MCF 10A (cell line): ENCODE measurements at regions of chr12 and their contacts with region 1.

Region 1: DNA sequence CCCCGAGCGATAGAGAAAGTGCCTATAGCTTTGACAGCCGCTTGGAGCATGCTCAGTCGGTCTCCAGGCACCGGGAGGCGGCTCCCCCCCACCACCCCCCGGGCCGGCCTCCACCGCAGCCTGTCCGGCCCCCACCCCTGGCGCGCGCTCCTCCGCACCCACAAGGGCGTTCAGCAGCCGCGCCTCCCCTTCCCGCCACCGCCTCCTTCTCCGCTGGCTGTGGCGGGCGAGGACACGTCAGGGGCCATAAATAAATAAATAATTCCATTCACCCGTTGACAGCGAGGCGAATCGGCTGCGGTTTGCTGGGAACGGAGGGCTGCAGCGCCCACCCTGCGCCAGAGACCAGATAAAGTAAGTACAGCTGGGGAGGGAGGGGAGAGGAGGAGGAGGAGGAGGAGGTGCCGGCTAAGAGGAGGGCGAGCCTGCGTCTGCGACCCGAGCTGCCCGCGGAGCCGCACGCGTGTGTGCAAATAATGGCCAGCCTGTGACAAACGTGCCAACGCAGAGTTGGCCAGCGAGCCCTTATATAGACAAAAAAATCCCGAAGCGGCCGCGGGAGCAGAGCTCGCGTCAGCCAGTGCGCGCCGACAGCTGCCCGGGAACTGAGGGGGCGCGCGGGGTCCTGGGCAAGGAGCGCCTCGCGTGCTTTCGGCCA is at the start of gene SLC16A7:
- DNase-seq: peak; percentile 91
- H3K4me3 Mint-ChIP-seq: peak within 1 kb of the TSS; percentile 72
- H3K27ac Mint-ChIP-seq: peak within 1 kb of the TSS; percentile 92
- H3K4me1 Mint-ChIP-seq: peaks cover 27% of the 10 kb centered on the region
- H3K27me3 Mint-ChIP-seq: no peaks in the 10 kb centered on the region
- CTCF ChIP-seq: no peak
- total RNA-seq, gene SLC16A7: 28.4 and 32.6 TPM in 2 replicates

Region 2: GRCh38 chr12:59431266-59431665 is 164.7 kb before region 1 on chr12:
- CTCF ChIA-PET with region 1: no interaction called
- POLR2A ChIA-PET with region 1: interaction called, 4 read pairs
- intact Hi-C with region 1: loop called (anchors 5 kb)
- DNase-seq: peak; percentile 16
- H3K4me3 Mint-ChIP-seq: no peak overlapping the region
- H3K27ac Mint-ChIP-seq: no peak overlapping the region
- H3K4me1 Mint-ChIP-seq: no peaks in the 10 kb centered on the region
- H3K27me3 Mint-ChIP-seq: no peaks in the 10 kb centered on the region
- CTCF ChIP-seq: peak; percentile 29

Region 3: GRCh38 chr12:59632408-59632807 is 36.4 kb after region 1 on chr12:
- CTCF ChIA-PET with region 1: no interaction called
- POLR2A ChIA-PET with region 1: interaction called, 21 read pairs
- intact Hi-C with region 1: no loop called
- DNase-seq: peak; percentile 94
- H3K4me3 Mint-ChIP-seq: peak overlapping the region; percentile 28
- H3K27ac Mint-ChIP-seq: peak overlapping the region; percentile 33
- H3K4me1 Mint-ChIP-seq: peaks cover 16% of the 10 kb centered on the region
- H3K27me3 Mint-ChIP-seq: no peaks in the 10 kb centered on the region
- CTCF ChIP-seq: no peak

Region 4: DNA sequence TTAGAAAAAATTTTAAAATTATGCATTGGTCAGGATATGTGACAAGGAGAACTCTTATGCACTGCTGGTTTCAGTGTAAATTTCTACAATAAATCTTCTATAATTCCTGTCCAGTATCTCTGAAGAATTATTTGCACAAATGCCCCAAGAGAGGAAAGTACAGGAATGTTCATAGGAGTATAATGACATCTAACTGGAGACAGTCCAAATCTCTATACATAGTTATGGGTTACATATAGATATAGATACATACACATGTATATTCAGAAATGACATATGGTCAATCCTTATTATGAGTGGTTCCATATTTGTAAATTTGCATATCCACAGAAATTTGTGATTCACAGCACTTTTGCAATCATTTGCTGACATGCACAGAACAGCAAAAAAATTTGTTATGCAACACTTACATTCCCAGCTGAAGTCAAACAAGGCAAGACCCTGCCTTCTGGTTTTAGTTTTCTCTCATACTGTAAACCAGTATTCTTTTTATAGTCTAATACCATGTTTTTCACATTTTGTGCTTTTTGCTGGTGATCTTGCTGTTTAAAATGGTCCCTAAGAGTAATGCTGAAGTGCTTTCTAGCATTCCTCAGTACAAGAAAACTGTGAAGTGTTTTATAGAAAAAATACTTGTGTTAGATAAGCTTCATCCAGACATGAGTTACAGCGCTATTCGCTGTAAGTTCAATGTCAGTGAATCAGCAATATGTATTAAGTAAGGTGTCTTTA is 103.6 kb after region 1 on chr12:
- CTCF ChIA-PET with region 1: no interaction called
- POLR2A ChIA-PET with region 1: interaction called, 20 read pairs
- intact Hi-C with region 1: loop called (anchors 1 kb)
- DNase-seq: peak; percentile 83
- H3K4me3 Mint-ChIP-seq: no peak overlapping the region
- H3K27ac Mint-ChIP-seq: no peak overlapping the region
- H3K4me1 Mint-ChIP-seq: peaks cover 4% of the 10 kb centered on the region
- H3K27me3 Mint-ChIP-seq: no peaks in the 10 kb centered on the region
- CTCF ChIP-seq: no peak

Region 5: DNA sequence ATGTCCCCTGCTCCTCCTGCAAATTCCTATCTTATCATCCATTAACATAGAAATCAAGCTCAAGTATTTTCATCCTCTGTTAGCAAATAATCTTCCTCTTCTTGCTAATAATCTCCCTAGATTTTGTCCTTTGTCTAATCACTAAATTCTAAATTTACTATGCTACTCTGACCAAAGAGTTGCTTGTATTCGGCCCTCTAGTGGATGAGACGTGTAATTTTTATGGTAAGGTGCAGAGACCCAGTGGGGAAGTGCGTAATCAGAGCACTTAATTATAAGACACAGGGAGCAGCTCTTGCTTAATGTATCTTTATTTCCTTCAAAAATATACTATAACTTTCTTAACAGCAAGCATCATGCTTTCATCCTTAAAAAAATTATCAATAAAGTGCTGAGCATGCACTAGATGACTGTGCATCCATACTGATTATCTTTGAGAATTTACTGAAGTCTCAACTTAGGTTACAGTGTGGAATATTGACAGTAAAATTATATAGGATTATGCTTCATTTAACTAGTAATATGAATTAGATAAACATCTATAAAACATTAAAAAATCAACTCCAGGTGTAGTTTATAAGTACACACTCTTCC is 212.4 kb after region 1 on chr12:
- CTCF ChIA-PET with region 1: interaction called, 4 read pairs
- POLR2A ChIA-PET with region 1: interaction called, 5 read pairs
- intact Hi-C with region 1: loop called (anchors 1 kb)
- DNase-seq: peak; percentile 51
- H3K4me3 Mint-ChIP-seq: no peak overlapping the region
- H3K27ac Mint-ChIP-seq: no peak overlapping the region
- H3K4me1 Mint-ChIP-seq: peaks cover 7% of the 10 kb centered on the region
- H3K27me3 Mint-ChIP-seq: no peaks in the 10 kb centered on the region
- CTCF ChIP-seq: peak; percentile 68

Region 6: GRCh38 chr12:59972941-59973340 is 376.9 kb after region 1 on chr12:
- CTCF ChIA-PET with region 1: no interaction called
- POLR2A ChIA-PET with region 1: no interaction called
- intact Hi-C with region 1: loop called (anchors 10 kb)
- DNase-seq: peak; percentile 81
- H3K4me3 Mint-ChIP-seq: no peak overlapping the region
- H3K27ac Mint-ChIP-seq: peak overlapping the region; percentile 44
- H3K4me1 Mint-ChIP-seq: peaks cover 20% of the 10 kb centered on the region
- H3K27me3 Mint-ChIP-seq: no peaks in the 10 kb centered on the region
- CTCF ChIP-seq: no peak

Region 7: DNA sequence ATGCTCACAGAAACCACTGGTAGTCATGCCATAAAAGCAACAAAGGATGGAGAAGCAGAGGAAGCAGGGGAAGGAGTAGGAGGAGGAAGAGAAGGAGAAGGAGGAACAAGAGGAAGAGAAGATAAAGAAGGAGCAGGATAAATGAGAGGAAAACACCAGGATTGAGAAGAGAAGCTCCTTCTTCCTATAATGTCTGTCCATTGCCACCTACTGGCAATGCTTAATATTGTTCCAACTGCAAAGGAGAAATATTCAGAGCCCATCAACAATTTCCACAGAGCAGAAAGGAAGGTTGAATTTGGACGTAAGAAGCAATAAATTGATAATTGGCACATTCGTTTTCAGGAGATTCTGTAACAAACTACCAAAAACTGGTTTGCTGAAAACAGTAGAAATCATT is 898.2 kb after region 1 on chr12:
- CTCF ChIA-PET with region 1: no interaction called
- POLR2A ChIA-PET with region 1: interaction called, 3 read pairs
- intact Hi-C with region 1: loop called (anchors 1 kb)
- DNase-seq: peak; percentile 57
- H3K4me3 Mint-ChIP-seq: no peak overlapping the region
- H3K27ac Mint-ChIP-seq: no peak overlapping the region
- H3K4me1 Mint-ChIP-seq: no peaks in the 10 kb centered on the region
- H3K27me3 Mint-ChIP-seq: no peaks in the 10 kb centered on the region
- CTCF ChIP-seq: peak; percentile 70